ENCODE measurements at regions of chr9 and their contacts with region 1.

Region 1: GRCh38 chr9:25284365-25284764 is 393.9 kb downstream of the TUSC1 start:
- ATAC-seq: peak in 2 of 8 experiments; percentile 56 to 70
- H3K4me3 ChIP-seq: no peak overlapping the region
- H3K27ac ChIP-seq: no peak overlapping the region
- H3K4me1 ChIP-seq: no peaks in the 10 kb centered on the region

Region 2: DNA sequence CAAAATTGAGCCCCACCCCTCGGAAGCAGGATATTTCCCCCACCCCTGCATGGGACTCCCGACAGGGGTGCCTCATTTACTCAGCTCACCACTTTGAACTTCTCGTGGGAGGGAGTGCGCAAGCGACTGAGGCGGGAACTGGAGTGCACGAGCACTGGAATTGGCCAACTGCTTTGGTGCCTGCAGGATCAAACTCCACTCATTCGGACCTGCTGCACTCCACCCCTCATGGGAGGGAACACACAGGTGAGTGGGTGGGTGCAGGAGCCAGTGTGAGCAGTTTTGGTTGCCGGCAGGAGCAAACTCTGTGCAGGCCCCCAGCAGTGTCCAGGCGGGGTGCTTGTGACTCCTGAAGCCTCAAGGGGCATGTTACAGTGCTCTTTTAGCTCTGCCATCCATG is 92.7 kb after region 1 on chr9:
- in situ Hi-C with region 1: loop called in 1 of 9 experiments (anchors 25 kb)
- ATAC-seq: no peak
- H3K4me3 ChIP-seq: no peak overlapping the region
- H3K27ac ChIP-seq: no peak overlapping the region
- H3K4me1 ChIP-seq: no peaks in the 10 kb centered on the region